Aorta (tissue), 5 donors: ENCODE measurements at regions of chr14 and their contacts with region 1.

Region 1: DNA sequence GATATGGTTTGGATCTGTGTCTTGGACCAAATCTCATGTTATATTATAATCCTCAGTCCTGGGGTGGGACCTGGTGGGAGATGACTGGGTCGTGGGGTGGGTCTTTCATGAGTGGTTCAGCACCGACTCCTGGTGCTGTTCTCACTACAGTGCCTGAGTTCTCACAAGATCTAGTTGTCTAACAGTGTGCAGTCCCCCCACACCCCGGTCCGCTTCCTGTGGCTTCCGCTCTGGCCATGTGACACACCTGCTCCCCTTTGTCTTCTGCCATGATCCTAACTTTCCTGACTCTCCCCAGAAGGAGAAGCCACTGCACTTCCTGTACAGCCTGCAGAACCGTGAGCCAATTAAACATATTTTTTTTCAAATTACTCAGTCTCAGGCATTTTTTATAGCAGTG is 1262.2 kb downstream of the TMEM121 start:
- DNase-seq: no peak
- ATAC-seq: no peak
- H3K4me3 ChIP-seq: no peak overlapping the region
- H3K27ac ChIP-seq: no peak overlapping the region
- H3K4me1 ChIP-seq: no peaks in the 10 kb centered on the region
- H3K27me3 ChIP-seq: no peaks in the 10 kb centered on the region

Region 2: DNA sequence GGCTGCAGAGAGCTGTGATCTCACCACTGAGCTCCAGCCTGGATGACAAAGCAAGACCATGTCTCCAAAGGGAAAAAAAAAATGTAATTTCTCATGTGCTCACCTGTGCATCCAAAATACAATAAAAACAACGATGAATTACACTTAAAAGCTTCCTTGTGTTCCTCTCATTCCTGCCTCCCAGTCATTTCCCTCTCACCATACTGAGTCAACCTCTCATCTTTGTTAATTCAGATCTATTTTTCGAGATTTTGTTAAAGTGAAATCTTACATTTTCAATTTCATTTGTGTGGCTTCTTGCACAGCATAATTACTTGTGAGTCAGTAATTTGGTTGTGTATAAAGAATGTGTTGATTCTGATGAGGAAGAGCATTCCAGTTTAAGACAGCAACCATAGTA is 59.0 kb before region 1 on chr14:
- intact Hi-C with region 1: loop called in 1 of 2 experiments (anchors 10 kb)
- DNase-seq: no peak
- ATAC-seq: no peak
- H3K4me3 ChIP-seq: no peak overlapping the region
- H3K27ac ChIP-seq: no peak overlapping the region
- H3K4me1 ChIP-seq: no peaks in the 10 kb centered on the region
- H3K27me3 ChIP-seq: no peaks in the 10 kb centered on the region